Tibial artery (tissue), 4 donors: ENCODE measurements at regions of chr12 and their contacts with region 1.

Region 1: DNA sequence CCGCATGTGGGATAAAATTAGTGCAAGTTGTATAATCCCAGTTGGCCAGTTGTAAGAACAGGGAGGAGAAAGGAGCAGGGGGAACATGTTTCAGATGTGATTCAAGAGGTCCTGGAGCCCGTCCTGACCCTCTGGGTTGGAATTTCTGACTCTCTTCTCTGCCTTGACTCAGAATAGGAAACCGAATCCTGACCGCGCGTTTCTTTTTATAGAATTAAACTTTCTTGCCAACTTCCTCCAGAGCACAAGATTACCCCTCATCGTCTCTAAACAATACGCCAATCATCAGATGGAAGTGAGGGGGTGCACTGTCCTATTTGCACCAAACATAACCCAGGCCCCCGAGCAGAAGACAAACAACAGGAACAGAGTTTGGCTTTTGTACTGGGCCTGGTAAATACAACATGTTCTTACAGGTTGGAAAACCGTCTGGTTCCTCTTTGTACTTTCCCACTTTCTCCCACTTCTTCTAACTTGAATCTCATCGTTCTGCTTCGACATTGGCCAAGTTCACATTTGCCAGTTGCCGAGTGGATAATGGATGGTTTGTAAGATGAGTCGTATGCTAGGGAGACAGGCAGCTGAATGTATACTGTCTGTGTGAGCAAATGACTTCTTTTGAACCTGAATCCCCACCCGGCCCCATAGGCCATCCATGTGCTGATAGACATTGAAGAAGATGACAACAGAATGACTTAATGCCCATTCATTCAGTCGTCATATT is 42.6 kb upstream of the MED13L start:
- DNase-seq: peak; percentile 86 to 88
- H3K4me3 ChIP-seq: peak overlapping the region; percentile 2 to 28
- H3K27ac ChIP-seq: peak overlapping the region; percentile 73 to 76
- H3K4me1 ChIP-seq: peaks cover 0 to 44% (median 31%) of the 10 kb centered on the region in 4 donors
- H3K27me3 ChIP-seq: no peaks in the 10 kb centered on the region
- CTCF ChIP-seq: no peak

Region 2: DNA sequence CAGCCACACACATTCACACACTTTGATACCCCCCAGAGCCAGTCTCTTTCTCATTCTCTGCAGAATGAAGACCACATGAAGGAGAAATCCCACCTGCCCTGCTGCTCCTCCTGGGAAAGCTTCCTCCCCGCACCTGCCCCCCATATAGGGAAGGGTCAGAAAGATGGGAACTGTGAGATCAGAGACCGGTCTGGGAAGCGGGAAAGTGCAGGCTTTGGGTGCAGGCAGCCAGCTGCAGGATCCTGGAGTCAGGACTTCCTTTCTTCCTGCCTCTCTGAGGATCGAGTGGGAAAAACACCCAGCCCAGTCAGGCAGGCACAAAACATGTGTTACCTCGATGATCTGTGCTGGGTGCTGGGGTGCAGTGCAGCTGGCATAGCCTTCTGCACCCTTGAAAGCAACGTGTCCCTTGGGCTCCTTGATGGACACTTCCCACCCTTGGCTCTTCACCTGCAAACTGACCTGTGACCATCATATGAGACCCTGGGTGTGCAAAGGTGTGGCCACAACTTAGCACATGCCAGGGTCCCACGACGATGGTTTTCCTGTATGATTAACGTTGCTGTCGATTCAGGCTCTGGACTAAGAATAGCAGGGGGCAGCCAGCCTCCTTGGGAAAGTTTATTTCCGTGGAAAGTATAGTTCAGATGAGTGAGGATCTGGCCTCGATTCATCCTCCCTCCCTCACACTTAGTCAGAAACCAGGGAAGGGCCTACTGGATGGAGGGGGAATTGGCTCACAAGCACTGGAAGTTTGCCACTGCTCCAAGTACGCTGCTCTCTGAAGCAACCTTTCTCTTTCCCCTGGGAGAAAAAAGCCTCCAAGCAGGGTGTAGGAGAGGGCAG is 62.8 kb after region 1 on chr12:
- intact Hi-C with region 1: loop called (anchors 10 kb)
- DNase-seq: peak; percentile 87 to 94
- H3K4me3 ChIP-seq: no peak overlapping the region
- H3K27ac ChIP-seq: peak overlapping the region; percentile 21 to 57
- H3K4me1 ChIP-seq: peaks cover 0 to 45% (median 31%) of the 10 kb centered on the region in 4 donors
- H3K27me3 ChIP-seq: no peaks in the 10 kb centered on the region
- CTCF ChIP-seq: peak; percentile 18 to 35

Region 3: GRCh38 chr12:116426391-116427136 is 106.5 kb after region 1 on chr12:
- intact Hi-C with region 1: loop called (anchors 10 kb)
- DNase-seq: peak; percentile 79 to 88
- H3K4me3 ChIP-seq: no peak overlapping the region
- H3K27ac ChIP-seq: peak overlapping the region; percentile 16 to 38
- H3K4me1 ChIP-seq: peaks cover 0 to 24% (median 20%) of the 10 kb centered on the region in 4 donors
- H3K27me3 ChIP-seq: no peaks in the 10 kb centered on the region
- CTCF ChIP-seq: peak; percentile 39 to 49